K562 (cell line): ENCODE measurements at regions of chr5 and their contacts with region 1.

Region 1: DNA sequence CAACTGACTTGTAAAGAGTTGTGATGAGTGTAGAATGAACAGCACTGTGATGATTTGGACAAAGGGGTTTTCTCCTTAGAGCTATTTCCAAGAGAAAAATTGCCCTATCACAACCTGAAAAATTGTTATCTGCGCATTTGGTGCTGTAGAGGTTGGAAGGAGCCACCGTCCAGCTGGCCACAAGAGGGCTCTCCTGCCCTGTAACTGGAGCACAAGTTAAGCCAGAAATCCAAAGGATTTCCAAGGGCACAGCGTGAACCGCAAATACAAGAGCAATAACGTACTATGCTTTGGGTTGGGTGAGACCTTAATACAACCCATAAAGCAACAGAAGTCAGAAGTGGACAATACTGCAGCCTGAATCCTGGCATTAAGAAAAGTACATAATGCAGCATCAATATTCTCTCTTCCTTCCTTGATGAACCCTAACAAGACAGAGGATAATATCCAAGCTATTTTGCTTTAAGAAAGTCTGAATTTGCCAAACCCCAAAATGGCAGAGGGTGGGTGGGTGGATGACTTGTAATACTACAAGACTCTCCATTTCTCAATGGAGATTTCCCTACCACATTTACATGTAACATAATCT is 56.8 kb upstream of the SMIM32 start:
- DNase-seq: peak; percentile 41 to 67 (median 46)
- ATAC-seq: peak; percentile 95
- H3K4me3 ChIP-seq: no peak overlapping the region
- H3K27ac ChIP-seq: no peak overlapping the region
- H3K4me1 ChIP-seq: no peaks in the 10 kb centered on the region; a peak in 2 of 5 replicates
- H3K27me3 ChIP-seq: peaks cover 0 to 6% of the 10 kb centered on the region in 2 experiments; a peak in 3 of 5 replicates
- CTCF ChIP-seq: peak; percentile 75 to 89 (median 87)
- EP300 ChIP-seq: no peak
- POLR2A ChIP-seq: no peak
- RAD21 ChIP-seq: peak; percentile 90

Region 2: DNA sequence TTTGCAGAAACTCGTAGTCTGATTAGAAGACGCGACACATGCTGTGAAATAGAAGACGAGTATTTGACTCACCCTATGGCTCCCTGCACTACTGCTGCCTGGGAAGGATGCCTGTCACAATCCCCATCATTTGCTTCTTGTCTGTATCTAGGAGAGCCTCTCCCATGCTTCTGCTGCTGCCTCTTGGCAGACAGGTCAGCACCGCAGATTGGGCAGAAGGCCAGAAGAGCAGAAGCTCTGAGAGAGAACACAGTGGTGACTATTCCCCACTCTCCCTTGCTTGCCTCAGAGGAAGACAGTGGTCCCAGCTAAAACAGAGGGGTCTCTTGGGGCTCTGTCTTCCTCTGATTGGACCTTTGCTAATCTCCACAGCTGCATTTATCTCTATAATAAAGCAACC is 27.2 kb after region 1 on chr5:
- CTCF ChIA-PET with region 1: no interaction called
- POLR2A ChIA-PET with region 1: no interaction called
- in situ Hi-C with region 1: no loop called
- intact Hi-C with region 1: no loop called
- DNase-seq: no peak
- ATAC-seq: no peak
- H3K4me3 ChIP-seq: no peak overlapping the region
- H3K27ac ChIP-seq: no peak overlapping the region
- H3K4me1 ChIP-seq: no peaks in the 10 kb centered on the region
- H3K27me3 ChIP-seq: no peaks in the 10 kb centered on the region
- CTCF ChIP-seq: no peak
- EP300 ChIP-seq: no peak
- POLR2A ChIP-seq: no peak
- RAD21 ChIP-seq: no peak

Region 3: GRCh38 chr5:136309932-136310598 is 60.3 kb after region 1 on chr5:
- CTCF ChIA-PET with region 1: no interaction called
- POLR2A ChIA-PET with region 1: no interaction called
- in situ Hi-C with region 1: no loop called
- intact Hi-C with region 1: loop called (anchors 5 kb)
- DNase-seq: no peak
- ATAC-seq: no peak
- H3K4me3 ChIP-seq: no peak overlapping the region
- H3K27ac ChIP-seq: no peak overlapping the region
- H3K4me1 ChIP-seq: no peaks in the 10 kb centered on the region
- H3K27me3 ChIP-seq: peaks cover 0 to 8% of the 10 kb centered on the region in 2 experiments; a peak in 2 of 5 replicates
- CTCF ChIP-seq: no peak
- EP300 ChIP-seq: no peak
- POLR2A ChIP-seq: no peak
- RAD21 ChIP-seq: no peak

Region 4: DNA sequence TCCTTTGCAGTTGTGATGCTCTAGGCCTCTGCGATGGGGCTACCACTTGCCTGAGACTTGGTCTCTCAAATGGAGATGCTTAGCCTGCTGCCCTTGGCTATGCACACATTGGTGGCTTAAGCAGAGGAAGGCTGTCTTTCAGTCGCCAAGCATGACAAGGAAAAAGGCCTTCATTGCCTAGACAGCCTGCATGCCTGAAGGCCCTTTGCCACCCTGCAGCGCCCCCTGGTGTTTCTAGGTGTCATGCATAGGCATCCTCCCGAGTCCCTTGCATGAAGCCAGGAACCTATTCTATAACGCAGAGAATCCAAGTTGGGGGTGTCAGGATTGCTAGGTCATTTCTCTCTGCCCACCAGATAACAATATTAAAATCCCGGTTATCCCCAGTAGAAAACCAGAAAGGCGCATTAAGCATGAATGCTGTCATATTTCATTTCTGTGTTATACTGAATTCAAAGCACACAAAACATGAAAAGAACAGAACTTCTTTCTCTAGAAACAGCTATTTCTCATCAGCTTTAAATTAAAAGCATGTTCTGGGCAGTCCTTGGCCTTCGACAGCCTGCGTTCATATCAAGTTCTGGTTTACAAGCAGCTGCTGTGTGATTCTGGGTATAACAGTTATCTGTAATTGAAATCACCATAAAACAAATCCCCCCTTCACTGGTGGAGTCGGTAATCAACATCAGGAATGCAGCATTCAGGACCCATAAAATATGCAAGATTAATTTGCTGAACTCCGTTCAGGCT is 175.2 kb after region 1 on chr5:
- CTCF ChIA-PET with region 1: no interaction called
- POLR2A ChIA-PET with region 1: no interaction called
- in situ Hi-C with region 1: loop called (anchors 10 kb)
- intact Hi-C with region 1: loop called (anchors 1 kb)
- DNase-seq: peak; percentile 75 to 82 (median 80)
- ATAC-seq: peak; percentile 99
- H3K4me3 ChIP-seq: no peak overlapping the region
- H3K27ac ChIP-seq: no peak overlapping the region
- H3K4me1 ChIP-seq: no peaks in the 10 kb centered on the region
- H3K27me3 ChIP-seq: peaks cover 4 to 6% of the 10 kb centered on the region in 2 experiments; a peak in 4 of 5 replicates
- CTCF ChIP-seq: peak; percentile 79 to 87 (median 81)
- EP300 ChIP-seq: no peak
- POLR2A ChIP-seq: no peak
- RAD21 ChIP-seq: peak; percentile 48 to 76